ENCODE measurements at regions of chr12 and their contacts with region 1.

Region 1: DNA sequence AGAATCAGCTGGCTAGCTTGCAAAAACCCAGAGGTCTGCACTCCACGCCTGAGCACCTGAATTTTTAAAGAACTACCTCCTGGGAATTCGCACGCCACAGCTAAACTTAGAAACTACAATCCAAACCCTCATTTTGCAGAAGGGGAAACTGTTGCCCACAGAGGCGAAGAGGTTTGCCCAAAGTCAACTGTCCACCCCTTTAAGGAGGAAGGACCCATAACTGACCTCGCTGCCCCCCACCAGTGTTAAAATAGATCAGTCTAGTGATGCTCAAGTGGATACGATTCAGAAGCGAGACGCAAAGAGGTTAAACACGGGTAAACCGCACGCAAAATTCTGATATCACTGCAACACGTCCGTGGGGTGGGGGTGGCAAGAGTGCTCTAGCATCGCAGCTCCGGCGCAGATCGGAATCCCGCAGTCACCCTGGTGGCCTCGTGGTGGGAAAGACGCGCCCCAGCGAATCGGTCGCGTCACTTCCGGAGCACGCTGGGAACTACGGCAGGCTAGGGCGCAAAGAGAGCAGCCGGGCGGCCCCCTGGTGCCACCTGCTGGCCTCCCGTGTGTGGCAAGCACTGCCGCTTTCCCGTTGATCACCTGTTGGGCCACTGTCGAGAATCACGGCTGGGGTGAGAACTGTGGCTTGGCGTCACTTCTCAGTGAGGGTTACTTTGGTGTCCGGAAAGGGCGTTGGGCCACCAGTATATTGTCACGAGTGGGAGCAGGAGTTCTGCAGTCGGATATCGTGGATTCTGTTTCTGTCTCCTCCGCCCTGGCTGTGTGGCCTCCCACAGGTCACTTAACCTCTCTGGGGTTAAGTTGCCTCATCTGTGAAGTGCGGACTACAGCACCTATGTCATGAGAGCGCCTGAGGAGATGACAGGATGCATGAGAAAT is at the start of gene ALKBH2:
- DNase-seq: peak; percentile 82 to 89
- H3K4me3 ChIP-seq: peak within 1 kb of the TSS; percentile 72
- H3K27ac ChIP-seq: peak within 1 kb of the TSS; percentile 26; the same call in 1 of the 2 replicates
- H3K4me1 ChIP-seq: peaks cover 18% of the 10 kb centered on the region; the same call in 1 of the 2 replicates
- H3K27me3 ChIP-seq: no peaks in the 10 kb centered on the region
- CTCF ChIP-seq: peak; percentile 90
- total RNA-seq, gene ALKBH2: 14.9 and 15.2 TPM in 2 replicates

Region 2: DNA sequence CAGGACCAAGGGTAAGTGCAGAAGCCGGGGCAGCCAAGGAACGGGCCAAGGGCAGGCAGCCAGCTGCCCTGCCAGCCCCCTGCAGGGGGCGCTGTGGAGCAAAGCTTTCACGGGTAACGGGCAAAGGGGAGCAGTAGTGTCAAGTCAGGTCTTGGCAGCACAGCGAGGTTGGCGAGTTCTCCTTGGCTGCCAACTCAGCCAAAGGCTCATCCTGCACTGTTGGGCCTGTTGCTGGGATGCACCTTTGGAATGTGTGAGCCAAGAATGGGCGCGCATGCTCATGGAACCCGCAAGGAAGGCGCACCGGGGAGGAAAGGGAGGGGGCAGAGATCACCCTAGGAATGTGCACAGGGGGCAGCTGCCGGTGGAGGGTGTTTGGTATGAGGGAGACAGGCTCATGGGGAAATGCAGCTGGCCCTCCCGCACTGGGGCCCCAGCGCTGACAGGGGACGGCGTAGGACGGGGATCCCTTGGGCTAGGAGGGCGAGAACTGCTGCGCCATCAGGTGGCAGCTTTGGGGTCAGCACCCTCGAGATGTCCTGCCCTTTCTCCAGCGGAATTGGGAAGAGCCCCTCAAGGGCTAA is 1180.8 kb before region 1 on chr12:
- CTCF ChIA-PET with region 1: no interaction called
- POLR2A ChIA-PET with region 1: no interaction called
- intact Hi-C with region 1: loop called (anchors 10 kb)
- DNase-seq: peak in 1 of 2 experiments; percentile 12
- H3K4me3 ChIP-seq: no peak overlapping the region
- H3K27ac ChIP-seq: no peak overlapping the region
- H3K4me1 ChIP-seq: no peaks in the 10 kb centered on the region
- H3K27me3 ChIP-seq: peaks cover 52% of the 10 kb centered on the region
- CTCF ChIP-seq: peak; percentile 58

Region 3: DNA sequence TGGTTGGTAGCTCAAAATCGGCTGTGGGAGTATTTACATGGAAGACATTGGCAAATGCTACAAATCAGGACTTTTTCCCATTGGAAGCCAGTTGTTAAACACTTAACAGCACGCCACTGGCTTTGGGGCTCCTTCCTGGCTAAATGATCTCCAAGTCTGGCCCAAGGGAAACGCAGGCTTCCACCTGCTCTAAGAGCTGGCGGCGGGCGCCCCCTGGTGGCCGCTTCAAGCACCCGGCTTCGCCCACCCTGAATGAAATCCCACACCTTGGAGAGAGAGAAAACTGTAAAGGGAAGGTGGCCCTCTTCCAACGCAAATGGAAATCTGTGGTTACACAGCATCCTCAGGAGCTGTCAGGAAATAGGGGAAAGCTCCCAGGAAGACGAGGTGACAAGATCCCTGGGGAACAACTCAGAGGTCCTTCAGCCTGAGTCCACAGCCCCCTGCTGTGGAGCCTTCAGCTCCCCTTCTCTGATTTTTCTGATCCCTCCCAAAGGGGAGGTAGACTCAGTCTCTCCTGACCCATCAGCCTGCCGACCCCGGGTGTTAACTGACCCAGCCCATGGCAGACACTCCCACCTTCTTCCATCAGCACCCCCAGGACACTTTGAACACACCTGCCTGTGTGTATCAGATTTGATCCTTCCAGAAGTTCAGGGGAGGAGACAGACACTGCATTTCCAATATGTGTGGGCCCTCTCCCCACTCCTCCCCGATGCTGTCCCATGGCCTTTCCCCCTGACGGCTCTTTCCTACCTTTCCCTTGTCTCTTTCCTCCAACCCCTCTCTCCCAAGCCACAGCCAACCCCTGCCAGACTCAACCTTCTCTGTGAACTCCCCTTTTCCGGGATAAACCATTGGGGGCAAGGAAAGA is 475.0 kb before region 1 on chr12:
- CTCF ChIA-PET with region 1: no interaction called
- POLR2A ChIA-PET with region 1: no interaction called
- intact Hi-C with region 1: loop called (anchors 5 kb)
- DNase-seq: peak; percentile 58 to 77
- H3K4me3 ChIP-seq: no peak overlapping the region
- H3K27ac ChIP-seq: no peak overlapping the region
- H3K4me1 ChIP-seq: peaks cover 16% of the 10 kb centered on the region
- H3K27me3 ChIP-seq: no peaks in the 10 kb centered on the region
- CTCF ChIP-seq: peak; percentile 98

Region 4: GRCh38 chr12:108803428-108804105 is 289.7 kb before region 1 on chr12:
- CTCF ChIA-PET with region 1: no interaction called
- POLR2A ChIA-PET with region 1: no interaction called
- intact Hi-C with region 1: loop called (anchors 2 kb)
- DNase-seq: peak; percentile 58 to 65
- H3K4me3 ChIP-seq: no peak overlapping the region
- H3K27ac ChIP-seq: no peak overlapping the region
- H3K4me1 ChIP-seq: no peaks in the 10 kb centered on the region
- H3K27me3 ChIP-seq: no peaks in the 10 kb centered on the region
- CTCF ChIP-seq: peak; percentile 94

Region 5: GRCh38 chr12:109385339-109386067 is 292.2 kb after region 1 on chr12:
- CTCF ChIA-PET with region 1: no interaction called
- POLR2A ChIA-PET with region 1: no interaction called
- intact Hi-C with region 1: loop called (anchors 5 kb)
- DNase-seq: peak; percentile 6 to 52
- H3K4me3 ChIP-seq: no peak overlapping the region
- H3K27ac ChIP-seq: no peak overlapping the region
- H3K4me1 ChIP-seq: no peaks in the 10 kb centered on the region
- H3K27me3 ChIP-seq: peaks cover 9% of the 10 kb centered on the region
- CTCF ChIP-seq: peak; percentile 80

Measured in PC-9 (cell line).